Activated CD8-positive, alpha-beta T cell treated with anti-CD3 and anti-CD28 coated beads for 36 hours (primary cell): ENCODE measurements at regions of chr10 and their contacts with region 1.

Region 1: GRCh38 chr10:6202684-6203330 is at the start of gene PFKFB3:
- DNase-seq: peak; percentile 97
- ATAC-seq: peak; percentile 60
- H3K4me3 Mint-ChIP-seq: peak within 1 kb of the TSS; percentile 98
- H3K27ac Mint-ChIP-seq: peak within 1 kb of the TSS; percentile 98
- H3K4me1 Mint-ChIP-seq: peaks cover 33% of the 10 kb centered on the region
- H3K27me3 Mint-ChIP-seq: no peaks in the 10 kb centered on the region
- CTCF ChIP-seq: peak; percentile 97
- total RNA-seq, gene PFKFB3: 107 to 117 TPM

Region 2: DNA sequence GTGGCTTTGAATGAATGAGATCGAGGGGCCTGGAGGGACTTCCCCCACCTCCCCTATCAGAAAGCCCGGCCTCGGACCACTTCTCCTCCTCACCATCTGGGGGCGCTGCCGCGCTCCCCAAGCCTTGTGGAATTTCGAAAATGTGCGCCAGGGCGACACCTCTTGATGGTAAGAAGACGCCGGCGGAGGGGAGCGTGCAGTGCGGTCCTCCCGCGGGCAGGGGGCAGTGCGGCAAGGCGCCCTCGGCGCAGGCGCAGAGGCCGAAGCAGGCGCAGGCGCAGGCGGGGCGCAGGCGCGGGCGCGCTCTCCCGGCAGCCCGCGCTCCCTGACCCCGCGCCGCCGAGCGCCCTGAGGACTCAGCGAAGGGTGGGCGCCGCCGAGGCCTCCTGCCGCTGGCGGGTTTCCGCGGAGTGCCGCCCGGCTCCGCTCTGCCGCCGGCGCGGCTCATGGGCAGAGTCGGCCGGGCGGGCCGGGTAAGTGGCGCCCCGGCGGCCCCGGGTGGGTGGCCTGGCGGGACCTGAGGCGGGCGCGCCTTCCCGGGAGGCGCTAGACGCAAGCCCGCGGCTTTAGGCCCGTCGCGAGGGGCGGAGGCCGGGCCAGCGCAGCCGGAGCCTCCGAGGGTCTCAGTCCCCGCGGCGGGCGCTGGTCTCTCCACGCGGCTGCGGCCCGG is 114.0 kb before region 1 on chr10 and contains the start of gene RBM17:
- CTCF ChIA-PET with region 1: interaction called, 14 read pairs
- POLR2A ChIA-PET with region 1: interaction called, 5 read pairs
- intact Hi-C with region 1: no loop called
- DNase-seq: peak; percentile 98
- ATAC-seq: peak; percentile 79
- H3K4me3 Mint-ChIP-seq: peak within 1 kb of the TSS; percentile 84
- H3K27ac Mint-ChIP-seq: peak within 1 kb of the TSS; percentile 81
- H3K4me1 Mint-ChIP-seq: peaks cover 60% of the 10 kb centered on the region
- H3K27me3 Mint-ChIP-seq: no peaks in the 10 kb centered on the region
- CTCF ChIP-seq: peak; percentile 100
- total RNA-seq, gene RBM17: 284 to 285 TPM

Region 3: DNA sequence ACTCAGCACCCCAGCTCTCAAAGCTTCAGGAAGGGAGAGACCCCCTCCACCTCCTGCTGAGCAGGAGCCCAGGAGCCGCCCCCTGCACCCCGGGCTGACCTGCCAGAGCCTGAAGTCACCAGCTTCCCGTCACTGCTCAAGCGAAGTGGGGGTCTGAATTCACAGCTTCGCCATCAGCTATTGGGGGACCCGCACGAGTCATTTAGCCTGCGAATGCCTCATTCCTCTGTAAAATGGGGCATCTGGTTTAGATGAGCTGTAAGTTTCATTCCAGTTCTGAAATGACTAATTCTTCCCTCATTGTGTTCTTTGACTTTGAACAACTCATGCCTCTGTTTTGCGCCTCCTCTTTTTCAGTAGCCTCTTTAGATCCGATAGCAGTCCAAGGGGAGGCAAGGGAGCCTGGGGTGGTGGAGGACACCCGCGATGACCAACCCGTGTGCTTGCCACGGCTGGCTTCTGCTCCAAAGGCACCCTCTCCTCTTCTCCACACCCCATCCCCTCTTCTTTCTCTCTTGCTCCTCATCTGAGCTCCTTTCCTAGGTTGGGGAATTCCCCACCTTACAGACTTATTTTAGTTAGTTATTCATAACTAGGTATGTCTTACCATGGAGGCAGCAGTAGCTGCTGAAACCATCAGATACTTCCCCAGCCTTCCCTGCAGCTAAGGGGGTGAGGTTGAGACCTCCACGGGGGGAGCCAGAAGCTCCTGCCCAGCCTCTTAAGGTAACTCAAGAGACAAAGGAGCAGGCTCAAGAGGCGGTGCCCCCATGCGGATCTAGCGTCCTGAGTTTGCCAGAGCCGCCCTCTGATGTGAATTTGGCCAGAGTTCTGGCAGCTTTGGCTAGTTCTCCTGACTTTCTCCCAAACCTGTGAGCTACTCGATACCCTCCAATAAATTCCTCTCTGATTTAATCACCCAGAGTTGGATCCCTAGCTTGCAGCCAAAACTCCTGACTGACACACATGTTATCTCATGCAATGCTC is 66.3 kb before region 1 on chr10:
- CTCF ChIA-PET with region 1: interaction called, 15 read pairs
- POLR2A ChIA-PET with region 1: interaction called, 7 read pairs
- intact Hi-C with region 1: no loop called
- DNase-seq: peak; percentile 84
- ATAC-seq: peak; percentile 80
- H3K4me3 Mint-ChIP-seq: peak overlapping the region; percentile 58
- H3K27ac Mint-ChIP-seq: peak overlapping the region; percentile 89
- H3K4me1 Mint-ChIP-seq: peaks cover 53% of the 10 kb centered on the region
- H3K27me3 Mint-ChIP-seq: peaks cover 9% of the 10 kb centered on the region
- CTCF ChIP-seq: no peak

Region 4: DNA sequence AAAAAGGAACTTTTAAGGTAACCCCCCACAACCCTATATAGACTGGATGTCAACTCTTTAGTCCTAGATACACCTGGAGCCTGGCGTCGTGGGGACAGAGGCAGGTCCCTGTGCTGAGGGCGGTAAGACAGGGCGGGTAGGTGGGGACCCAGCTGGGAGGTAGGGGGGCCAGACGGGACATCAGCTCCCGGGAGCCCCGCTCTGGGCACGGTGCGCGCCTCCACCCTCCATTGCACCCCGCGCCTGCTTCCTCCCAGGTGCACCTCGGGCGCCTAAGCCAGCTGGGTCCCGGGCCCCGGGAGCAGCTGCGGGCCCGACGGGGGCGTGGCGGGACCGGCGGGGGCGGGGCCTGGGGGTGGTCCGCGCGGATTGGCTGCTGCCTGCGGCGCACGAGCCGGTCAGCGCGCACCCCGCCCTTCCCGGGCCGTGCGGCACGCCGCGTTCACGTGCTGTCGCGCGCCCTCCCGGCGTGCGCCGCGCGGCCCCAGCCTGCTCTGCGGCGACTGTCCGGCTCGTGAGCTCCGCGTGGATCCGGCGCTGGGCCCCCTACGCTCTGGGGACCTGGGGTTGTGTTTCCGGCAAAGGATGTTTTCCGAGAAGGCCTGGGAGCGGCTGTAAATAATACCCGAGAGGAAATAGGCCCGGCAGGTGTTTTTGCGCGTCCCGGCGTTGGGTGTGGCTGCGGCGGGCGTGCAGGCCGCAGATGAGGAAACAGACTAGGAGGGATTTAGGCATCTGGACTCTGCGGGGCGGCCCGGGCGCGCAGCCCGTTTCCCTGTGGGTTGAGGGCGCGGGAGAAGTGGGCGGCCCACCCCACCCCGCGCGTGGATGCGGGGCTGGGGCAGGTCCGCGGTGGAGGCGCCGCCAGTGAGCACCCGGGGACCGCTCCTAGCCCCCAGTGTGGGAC is 39.2 kb before region 1 on chr10:
- CTCF ChIA-PET with region 1: interaction called, 7 read pairs
- POLR2A ChIA-PET with region 1: interaction called, 10 read pairs
- intact Hi-C with region 1: no loop called
- DNase-seq: peak; percentile 90
- ATAC-seq: peak; percentile 97
- H3K4me3 Mint-ChIP-seq: peak overlapping the region; percentile 93
- H3K27ac Mint-ChIP-seq: peak overlapping the region; percentile 93
- H3K4me1 Mint-ChIP-seq: peaks cover 57% of the 10 kb centered on the region
- H3K27me3 Mint-ChIP-seq: no peaks in the 10 kb centered on the region
- CTCF ChIP-seq: no peak

Region 5: GRCh38 chr10:6275022-6275997 is 72.5 kb after region 1 on chr10:
- CTCF ChIA-PET with region 1: interaction called, 5 read pairs
- POLR2A ChIA-PET with region 1: interaction called, 3 read pairs
- intact Hi-C with region 1: loop called (anchors 10 kb)
- DNase-seq: peak; percentile 96
- ATAC-seq: peak; percentile 85
- H3K4me3 Mint-ChIP-seq: peak overlapping the region; percentile 72
- H3K27ac Mint-ChIP-seq: peak overlapping the region; percentile 96
- H3K4me1 Mint-ChIP-seq: peaks cover 49% of the 10 kb centered on the region
- H3K27me3 Mint-ChIP-seq: no peaks in the 10 kb centered on the region
- CTCF ChIP-seq: no peak

Region 6: GRCh38 chr10:6409971-6410651 is 207.3 kb after region 1 on chr10:
- CTCF ChIA-PET with region 1: interaction called, 54 read pairs
- POLR2A ChIA-PET with region 1: interaction called, 16 read pairs
- intact Hi-C with region 1: no loop called
- DNase-seq: peak; percentile 54
- ATAC-seq: peak; percentile 77
- H3K4me3 Mint-ChIP-seq: peak overlapping the region; percentile 26
- H3K27ac Mint-ChIP-seq: peak overlapping the region; percentile 71
- H3K4me1 Mint-ChIP-seq: peaks cover 47% of the 10 kb centered on the region
- H3K27me3 Mint-ChIP-seq: no peaks in the 10 kb centered on the region
- CTCF ChIP-seq: no peak